ENCODE measurements at regions of chr2 and their contacts with region 1.

Region 1: DNA sequence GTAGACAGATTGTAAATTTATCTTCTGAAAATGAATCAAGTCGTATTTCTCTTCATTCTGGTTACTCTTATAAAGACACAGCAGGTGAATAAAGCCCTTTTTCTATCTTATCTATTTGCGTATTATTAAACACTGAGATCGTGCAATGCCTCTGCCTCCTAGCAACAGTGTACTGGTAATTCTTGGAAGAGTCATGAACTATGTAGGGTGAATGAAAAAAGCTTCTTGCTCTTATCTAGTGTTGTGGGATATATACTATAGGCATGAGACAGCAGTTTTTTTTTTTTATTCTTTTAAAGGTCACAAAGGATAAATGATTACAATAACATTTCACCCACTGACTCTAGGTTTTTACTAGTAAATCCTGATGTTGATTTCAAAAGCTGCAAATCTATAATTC is 324.2 kb downstream of the PDE11A start:
- DNase-seq: no peak
- ATAC-seq: no peak
- H3K4me3 Mint-ChIP-seq: no peak overlapping the region
- H3K27ac Mint-ChIP-seq: no peak overlapping the region
- H3K4me1 Mint-ChIP-seq: no peaks in the 10 kb centered on the region
- H3K27me3 Mint-ChIP-seq: no peaks in the 10 kb centered on the region

Region 2: DNA sequence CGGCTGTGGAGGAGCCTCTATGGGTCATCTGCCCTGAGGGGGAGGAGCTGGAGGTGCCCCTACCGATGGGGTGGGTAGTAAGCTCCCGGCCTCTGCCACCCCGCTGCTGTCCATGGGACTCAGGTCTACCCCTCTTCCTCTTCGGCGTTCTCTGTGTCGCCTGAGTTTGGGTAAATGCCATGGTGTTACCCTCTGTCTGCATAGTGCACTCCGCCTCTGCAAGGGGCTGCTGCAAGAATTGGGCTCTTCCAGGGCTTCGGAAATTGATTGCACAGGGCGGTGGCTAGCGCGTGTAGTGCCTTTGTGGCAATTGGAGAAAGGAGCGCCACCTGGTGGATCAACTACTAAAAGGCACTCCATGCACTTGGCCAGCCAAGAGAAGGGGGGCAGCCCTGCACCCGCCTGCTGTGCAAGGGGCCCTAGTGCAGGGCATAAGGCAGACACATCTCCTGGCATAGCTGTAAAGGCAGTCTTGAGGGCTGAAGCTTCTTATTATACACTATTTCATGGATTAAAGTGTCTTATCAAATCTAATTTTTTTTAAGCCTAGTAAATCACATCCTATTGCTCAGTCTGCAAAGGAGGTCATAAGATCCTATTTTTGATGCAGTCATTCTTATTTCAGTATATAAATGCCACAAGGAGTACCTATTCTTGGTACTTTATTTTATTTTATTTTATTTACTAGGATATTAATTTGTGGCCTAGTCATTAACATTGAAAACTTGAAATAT is 15.3 kb after region 1 on chr2:
- CTCF ChIA-PET with region 1: interaction called, 34 read pairs
- POLR2A ChIA-PET with region 1: no interaction called
- intact Hi-C with region 1: no loop called
- DNase-seq: peak; percentile 90
- ATAC-seq: peak; percentile 99
- H3K4me3 Mint-ChIP-seq: no peak overlapping the region
- H3K27ac Mint-ChIP-seq: no peak overlapping the region
- H3K4me1 Mint-ChIP-seq: peaks cover 3% of the 10 kb centered on the region
- H3K27me3 Mint-ChIP-seq: peaks cover 11% of the 10 kb centered on the region

Region 3: DNA sequence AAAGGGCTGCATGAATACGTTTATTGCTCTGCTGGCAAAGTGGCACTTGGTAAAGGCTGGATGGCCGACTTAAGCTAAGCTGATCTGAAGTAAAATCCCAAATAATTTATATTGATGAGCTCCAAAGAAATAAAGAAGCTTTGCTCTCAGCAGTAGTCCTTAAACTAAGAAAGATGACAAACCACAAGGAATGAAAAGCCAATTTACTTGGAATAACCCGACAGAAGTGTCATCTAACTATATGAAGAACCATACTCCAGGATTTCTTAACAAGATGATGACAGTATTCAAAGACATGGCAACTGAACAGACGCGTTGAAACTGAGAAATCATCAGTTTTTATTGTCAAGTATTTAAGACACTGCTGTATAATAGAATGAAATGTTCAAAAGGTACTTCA is 30.1 kb after region 1 on chr2:
- CTCF ChIA-PET with region 1: no interaction called
- POLR2A ChIA-PET with region 1: no interaction called
- intact Hi-C with region 1: no loop called
- DNase-seq: no peak
- ATAC-seq: no peak
- H3K4me3 Mint-ChIP-seq: no peak overlapping the region
- H3K27ac Mint-ChIP-seq: no peak overlapping the region
- H3K4me1 Mint-ChIP-seq: peaks cover 19% of the 10 kb centered on the region
- H3K27me3 Mint-ChIP-seq: no peaks in the 10 kb centered on the region